IMR-90 (cell line): ENCODE measurements at regions of chr6 and their contacts with region 1.

Region 1: DNA sequence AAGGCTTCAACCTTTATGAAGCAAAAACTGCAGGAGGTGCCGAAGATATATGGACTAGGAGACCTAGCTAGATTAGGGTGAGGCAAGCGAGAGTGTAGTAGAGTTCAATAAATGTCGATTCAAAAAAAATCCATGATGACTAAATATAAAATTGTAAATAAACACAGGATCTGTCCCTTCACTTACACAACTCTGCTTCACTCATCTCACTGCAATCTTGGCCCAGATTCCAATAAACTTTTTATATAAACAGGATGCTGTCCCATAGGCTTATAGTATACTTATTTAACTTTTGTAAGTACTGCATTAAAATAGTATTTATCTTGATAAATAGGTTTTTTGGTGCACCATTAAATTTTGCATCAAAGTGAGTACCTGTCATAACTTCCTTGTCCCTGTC is 648.4 kb upstream of the NRSN1 start:
- DNase-seq: peak; percentile 52
- ATAC-seq: peak; percentile 48; the same call in 1 of the 2 replicates
- H3K4me3 ChIP-seq: no peak overlapping the region
- H3K27ac ChIP-seq: no peak overlapping the region
- H3K4me1 ChIP-seq: no peaks in the 10 kb centered on the region
- H3K27me3 ChIP-seq: no peaks in the 10 kb centered on the region
- CTCF ChIP-seq: no peak
- POLR2A ChIP-seq: no peak
- RAD21 ChIP-seq: no peak

Region 2: DNA sequence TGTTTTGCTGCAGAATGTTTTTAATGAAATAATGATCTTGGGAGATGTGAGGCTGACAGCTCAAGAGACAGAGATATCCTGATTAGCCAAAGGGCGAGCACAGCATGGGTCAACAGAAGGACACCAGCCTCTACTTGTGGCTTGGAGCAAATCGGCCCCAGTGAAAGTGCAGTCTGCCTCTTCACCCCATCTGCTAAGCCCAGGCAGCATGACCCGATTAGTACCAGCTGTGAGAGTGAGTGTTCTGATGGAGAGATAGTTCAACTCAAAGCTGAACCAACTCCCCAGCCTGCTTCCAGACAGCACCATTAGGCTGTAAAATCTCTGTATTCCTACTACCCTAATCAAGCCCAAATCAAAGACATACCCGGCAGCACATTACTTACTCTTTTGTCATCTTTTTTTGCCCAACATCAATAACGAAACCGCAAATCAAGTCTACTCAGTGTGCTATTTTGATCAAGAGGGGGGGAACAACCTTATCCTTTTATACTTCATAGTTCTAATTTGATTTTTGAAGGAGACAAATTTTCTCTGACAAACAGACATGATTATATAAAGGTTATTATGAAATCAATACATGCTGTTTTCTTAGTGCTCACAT is 134.3 kb after region 1 on chr6:
- CTCF ChIA-PET with region 1: no interaction called
- POLR2A ChIA-PET with region 1: no interaction called
- dilution Hi-C with region 1: no loop called
- in situ Hi-C with region 1: no loop called
- intact Hi-C with region 1: loop called (anchors 10 kb)
- DNase-seq: no peak
- ATAC-seq: no peak
- H3K4me3 ChIP-seq: no peak overlapping the region
- H3K27ac ChIP-seq: no peak overlapping the region
- H3K4me1 ChIP-seq: no peaks in the 10 kb centered on the region
- H3K27me3 ChIP-seq: no peaks in the 10 kb centered on the region
- CTCF ChIP-seq: no peak
- POLR2A ChIP-seq: no peak
- RAD21 ChIP-seq: no peak